Activated T-helper 1 cell treated with anti-CD3 and anti-CD28 coated beads, Interleukin-12 subunit alpha, Interleukin-12 subunit beta, Interleukin-2, Interleukin-4 antibody, amounts not matched to agents 30 ng/mL and 10 ng/mL and 1 ng/mL, durations not matched to agents 14 hours and 24 hours and 36 hours (primary cell): ENCODE measurements at regions of chr11 and their contacts with region 1.

Region 1: GRCh38 chr11:14358729-14359439 is at the start of gene RRAS2:
- DNase-seq: peak; percentile 72
- H3K4me3 Mint-ChIP-seq: peak within 1 kb of the TSS; percentile 99
- H3K27ac Mint-ChIP-seq: peak within 1 kb of the TSS; percentile 94
- H3K4me1 Mint-ChIP-seq: peaks cover 63% of the 10 kb centered on the region
- H3K27me3 Mint-ChIP-seq: peaks cover 2% of the 10 kb centered on the region
- total RNA-seq, gene RRAS2: 82.4 and 84.1 TPM in 2 replicates

Region 2: GRCh38 chr11:13276832-13277767 is 1081.8 kb before region 1 on chr11:
- intact Hi-C with region 1: loop called (anchors 10 kb)
- DNase-seq: peak; percentile 98
- H3K4me3 Mint-ChIP-seq: peak overlapping the region; percentile 98
- H3K27ac Mint-ChIP-seq: peak overlapping the region; percentile 80
- H3K4me1 Mint-ChIP-seq: peaks cover 52% of the 10 kb centered on the region
- H3K27me3 Mint-ChIP-seq: peaks cover 46% of the 10 kb centered on the region

Region 3: DNA sequence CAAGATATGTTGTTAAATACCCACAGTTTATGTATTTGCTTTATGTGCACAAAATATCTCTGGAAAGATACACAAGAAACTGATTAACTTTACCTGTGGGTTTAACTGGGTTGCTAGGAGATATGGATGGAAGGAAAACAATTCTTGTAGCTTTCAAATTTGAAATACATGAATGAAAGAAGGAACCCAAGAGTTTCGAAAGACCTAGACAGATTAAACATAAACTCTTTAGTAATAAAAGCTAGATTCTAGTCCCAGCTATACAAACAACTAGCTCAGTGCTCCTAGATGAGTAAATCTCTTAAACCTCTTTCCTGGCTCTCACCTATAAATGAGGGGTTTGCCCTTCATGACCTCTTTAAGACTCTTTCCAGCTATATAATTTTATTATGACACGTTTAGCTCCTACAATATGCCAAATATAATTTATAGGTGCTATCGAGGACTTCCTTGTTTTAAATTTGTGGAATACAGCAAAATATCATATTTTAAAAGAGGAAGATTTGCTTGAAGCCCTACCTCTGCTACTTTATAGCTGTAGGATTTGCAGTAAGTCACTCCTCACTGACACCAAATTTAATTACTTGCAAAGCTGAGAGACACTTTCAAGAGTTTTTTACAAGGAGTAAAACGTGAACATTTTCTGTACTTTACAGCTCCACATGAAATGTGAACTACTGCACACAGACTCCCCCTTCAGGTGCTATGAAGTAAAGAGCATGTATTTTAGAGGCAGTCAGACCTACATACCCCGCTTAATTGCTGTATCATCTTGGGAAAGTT is 50.6 kb before region 1 on chr11:
- intact Hi-C with region 1: loop called (anchors 2 kb)
- DNase-seq: no peak
- H3K4me3 Mint-ChIP-seq: no peak overlapping the region
- H3K27ac Mint-ChIP-seq: no peak overlapping the region
- H3K4me1 Mint-ChIP-seq: peaks cover 26% of the 10 kb centered on the region
- H3K27me3 Mint-ChIP-seq: no peaks in the 10 kb centered on the region

Region 4: GRCh38 chr11:14336507-14337503 is 22.1 kb before region 1 on chr11:
- intact Hi-C with region 1: loop called (anchors 1 kb)
- DNase-seq: no peak
- H3K4me3 Mint-ChIP-seq: no peak overlapping the region
- H3K27ac Mint-ChIP-seq: peak overlapping the region; percentile 82
- H3K4me1 Mint-ChIP-seq: peaks cover 58% of the 10 kb centered on the region
- H3K27me3 Mint-ChIP-seq: no peaks in the 10 kb centered on the region

Region 5: DNA sequence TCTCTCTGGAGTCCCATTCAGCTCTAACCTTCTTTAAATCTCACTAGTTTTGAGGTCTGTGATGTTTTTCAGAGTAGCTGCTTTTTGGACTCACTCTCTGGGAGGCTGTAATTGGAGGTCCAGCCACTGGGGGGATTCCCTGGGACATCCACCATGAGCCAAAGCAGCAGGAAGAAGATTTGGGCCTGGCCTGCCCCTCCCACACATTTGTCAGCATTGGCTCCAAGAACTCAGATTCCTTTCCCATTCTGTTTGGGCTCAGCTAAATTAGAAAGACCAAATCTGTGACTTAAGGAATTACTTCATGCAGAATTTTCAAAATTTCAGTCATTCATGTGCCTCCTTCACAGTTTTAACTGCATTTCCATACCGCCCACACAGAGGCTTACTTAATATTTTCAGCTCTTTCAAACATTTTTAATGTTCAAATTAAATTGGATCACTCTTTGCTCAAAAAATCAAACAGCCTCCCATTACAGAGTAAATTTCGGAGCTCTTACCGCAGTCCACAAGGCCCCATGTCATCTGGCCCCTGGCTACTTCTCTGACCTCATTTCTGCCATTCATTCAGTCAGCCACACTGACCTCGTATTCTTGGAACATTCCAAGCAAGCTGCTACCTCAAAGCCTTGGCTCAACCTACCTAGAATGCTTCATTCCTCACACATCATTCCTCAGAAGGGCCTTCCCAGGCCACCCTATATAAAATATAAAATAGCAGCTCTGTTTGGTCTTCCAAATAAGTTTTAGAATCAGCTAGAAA is 54.6 kb after region 1 on chr11:
- intact Hi-C with region 1: loop called (anchors 1 kb)
- DNase-seq: no peak
- H3K4me3 Mint-ChIP-seq: no peak overlapping the region
- H3K27ac Mint-ChIP-seq: no peak overlapping the region
- H3K4me1 Mint-ChIP-seq: peaks cover 79% of the 10 kb centered on the region
- H3K27me3 Mint-ChIP-seq: no peaks in the 10 kb centered on the region

Region 6: GRCh38 chr11:14499554-14500180 is 140.8 kb after region 1 on chr11 and contains the start of gene COPB1:
- intact Hi-C with region 1: loop called (anchors 5 kb)
- DNase-seq: peak; percentile 90
- H3K4me3 Mint-ChIP-seq: peak within 1 kb of the TSS; percentile 100
- H3K27ac Mint-ChIP-seq: peak within 1 kb of the TSS; percentile 98
- H3K4me1 Mint-ChIP-seq: peaks cover 49% of the 10 kb centered on the region
- H3K27me3 Mint-ChIP-seq: no peaks in the 10 kb centered on the region
- total RNA-seq, gene COPB1: 94.8 and 101 TPM in 2 replicates

Region 7: DNA sequence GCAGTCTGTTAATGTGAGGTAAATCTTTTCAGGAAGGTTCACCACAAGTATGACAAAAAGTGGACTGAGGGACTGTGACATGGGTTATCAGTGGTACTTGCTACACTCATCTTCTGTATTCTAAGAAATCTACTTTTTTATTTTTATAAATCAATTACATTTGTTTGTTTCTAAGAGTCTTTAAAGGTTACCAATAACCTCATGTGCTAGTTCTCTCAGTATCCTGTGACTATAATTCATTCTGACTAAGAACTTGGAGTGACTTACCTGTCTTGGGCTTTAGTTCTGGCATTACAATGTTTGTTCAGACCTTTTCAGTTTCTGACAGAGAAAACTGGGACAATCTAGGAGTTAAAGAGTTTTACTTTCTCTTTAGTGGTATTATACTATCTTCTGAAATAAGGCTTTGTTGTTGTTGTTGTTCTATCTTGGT is 393.1 kb after region 1 on chr11:
- intact Hi-C with region 1: no loop called
- DNase-seq: no peak
- H3K4me3 Mint-ChIP-seq: no peak overlapping the region
- H3K27ac Mint-ChIP-seq: peak overlapping the region; percentile 36
- H3K4me1 Mint-ChIP-seq: peaks cover 44% of the 10 kb centered on the region
- H3K27me3 Mint-ChIP-seq: no peaks in the 10 kb centered on the region

Region 8: GRCh38 chr11:15569305-15570025 is 1210.6 kb after region 1 on chr11:
- intact Hi-C with region 1: no loop called
- DNase-seq: no peak
- H3K4me3 Mint-ChIP-seq: no peak overlapping the region
- H3K27ac Mint-ChIP-seq: no peak overlapping the region
- H3K4me1 Mint-ChIP-seq: no peaks in the 10 kb centered on the region
- H3K27me3 Mint-ChIP-seq: no peaks in the 10 kb centered on the region